ENCODE measurements at regions of chr18 and their contacts with region 1.

Region 1: DNA sequence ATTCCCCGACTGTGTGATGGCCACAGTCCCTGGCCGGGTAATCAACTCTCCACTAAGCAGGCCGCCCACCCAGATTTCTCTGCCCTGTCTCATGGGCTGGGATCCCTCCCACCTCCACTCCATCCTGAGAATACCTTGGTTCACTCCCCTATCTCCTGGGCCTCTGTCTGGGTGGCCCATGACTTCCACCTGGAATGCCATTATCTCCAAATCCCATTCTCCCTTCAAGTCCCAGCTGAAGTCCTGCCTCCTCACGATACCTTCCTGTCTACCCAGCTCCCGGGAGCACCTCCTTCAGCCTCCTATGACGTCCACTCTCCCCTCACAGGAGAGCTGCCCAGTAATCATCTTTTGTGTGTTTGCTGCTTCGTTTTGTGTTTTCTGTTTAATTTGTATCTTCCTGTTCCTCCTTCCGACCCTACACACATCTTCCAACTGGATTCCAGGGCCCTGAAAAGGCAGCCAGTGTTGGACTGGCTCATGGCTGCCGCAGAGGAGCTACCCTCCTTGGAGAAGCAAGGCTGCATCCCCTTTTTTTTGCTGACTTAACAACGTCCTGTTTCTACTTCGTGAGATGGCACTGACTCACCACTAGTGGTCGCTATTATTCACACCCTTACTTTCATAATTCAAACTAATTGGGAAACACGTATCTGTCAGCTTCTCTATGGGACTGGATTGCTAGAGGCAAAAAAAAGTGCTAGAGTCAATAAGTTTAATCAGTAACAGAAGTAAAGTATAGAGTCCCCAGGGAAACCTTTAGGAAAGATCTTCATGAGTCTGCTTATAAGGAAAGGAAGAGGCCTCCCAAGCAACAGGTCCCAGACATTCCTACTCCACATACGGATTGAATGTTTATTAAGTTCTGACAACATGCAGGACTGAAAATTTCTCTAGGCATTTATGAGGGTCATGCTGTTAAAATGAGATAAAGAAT is 171.9 kb upstream of the GATA6 start:
- DNase-seq: peak; percentile 65
- H3K4me3 Mint-ChIP-seq: no peak overlapping the region
- H3K27ac Mint-ChIP-seq: peak overlapping the region; percentile 6
- H3K4me1 Mint-ChIP-seq: peaks cover 5% of the 10 kb centered on the region
- H3K27me3 Mint-ChIP-seq: no peaks in the 10 kb centered on the region
- CTCF ChIP-seq: peak; percentile 81

Region 2: GRCh38 chr18:21980744-21981143 is 16.7 kb before region 1 on chr18:
- CTCF ChIA-PET with region 1: interaction called, 12 read pairs
- POLR2A ChIA-PET with region 1: no interaction called
- intact Hi-C with region 1: no loop called
- DNase-seq: no peak
- H3K4me3 Mint-ChIP-seq: no peak overlapping the region
- H3K27ac Mint-ChIP-seq: no peak overlapping the region
- H3K4me1 Mint-ChIP-seq: no peaks in the 10 kb centered on the region
- H3K27me3 Mint-ChIP-seq: no peaks in the 10 kb centered on the region
- CTCF ChIP-seq: no peak

Region 3: DNA sequence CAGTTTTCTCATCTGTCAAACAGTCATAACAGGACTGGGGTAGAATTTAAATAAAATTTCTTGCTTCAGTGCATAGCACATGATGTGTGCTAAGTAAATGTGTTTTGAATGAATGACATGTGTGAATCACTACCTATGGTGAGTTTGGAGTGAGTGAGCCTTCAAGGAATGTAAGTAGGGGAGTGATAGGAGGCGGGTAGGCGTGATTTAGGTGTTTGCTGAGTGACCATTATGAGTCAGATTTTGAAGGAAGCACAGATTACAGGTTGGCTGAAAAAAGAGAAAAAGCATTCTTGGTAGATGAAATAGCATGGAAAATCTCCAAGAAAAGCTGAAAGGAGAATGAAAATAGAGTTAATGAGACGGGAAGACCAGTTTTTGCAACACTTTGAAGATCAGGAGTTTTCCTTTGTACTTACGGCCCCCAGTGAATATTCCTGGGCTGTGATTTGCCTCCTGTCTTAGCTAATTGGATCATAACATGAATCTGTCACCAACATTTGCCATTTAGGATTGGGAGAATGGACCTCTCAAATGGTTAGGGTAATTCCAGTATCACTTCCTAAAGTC is 35.0 kb after region 1 on chr18:
- CTCF ChIA-PET with region 1: interaction called, 10 read pairs
- POLR2A ChIA-PET with region 1: interaction called, 5 read pairs
- intact Hi-C with region 1: no loop called
- DNase-seq: peak; percentile 94
- H3K4me3 Mint-ChIP-seq: peak overlapping the region; percentile 1
- H3K27ac Mint-ChIP-seq: peak overlapping the region; percentile 29
- H3K4me1 Mint-ChIP-seq: peaks cover 14% of the 10 kb centered on the region
- H3K27me3 Mint-ChIP-seq: no peaks in the 10 kb centered on the region
- CTCF ChIP-seq: no peak